ENCODE measurements at regions of chr11 and their contacts with region 1.

Region 1: GRCh38 chr11:120235024-120235861 is 4.7 kb upstream of the POU2F3 start:
- DNase-seq: no peak
- H3K4me3 ChIP-seq: no peak overlapping the region
- H3K27ac ChIP-seq: peak overlapping the region; percentile 7
- H3K4me1 ChIP-seq: peaks cover 24% of the 10 kb centered on the region
- H3K27me3 ChIP-seq: no peaks in the 10 kb centered on the region
- CTCF ChIP-seq: peak; percentile 20 to 50 (median 34)
- POLR2A ChIP-seq: no peak

Region 2: DNA sequence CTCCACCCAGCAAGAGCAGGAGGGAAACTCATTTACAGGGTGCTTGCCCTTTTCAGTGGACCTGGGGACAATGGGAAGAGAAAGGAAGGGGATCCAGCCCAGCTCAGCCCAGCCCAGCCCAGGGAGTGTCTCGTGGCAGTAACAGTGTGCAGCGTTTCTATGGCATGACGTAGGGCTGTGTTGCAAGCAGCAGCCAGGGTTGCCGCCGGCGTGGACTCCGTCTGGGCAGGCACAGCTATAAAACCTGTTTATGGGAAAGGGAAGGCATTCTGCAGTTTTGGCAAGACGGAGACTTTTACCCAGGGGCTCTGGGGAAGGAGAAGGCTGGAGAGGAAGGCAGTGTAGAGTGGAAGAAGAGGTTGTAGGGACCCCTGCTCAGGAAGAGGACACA is 106.5 kb before region 1 on chr11:
- intact Hi-C with region 1: no loop called
- DNase-seq: no peak
- H3K4me3 ChIP-seq: peak overlapping the region in 1 of 2 donors; percentile 20
- H3K27ac ChIP-seq: peak overlapping the region; percentile 89
- H3K4me1 ChIP-seq: peaks cover 54% of the 10 kb centered on the region
- H3K27me3 ChIP-seq: no peaks in the 10 kb centered on the region
- CTCF ChIP-seq: no peak
- POLR2A ChIP-seq: peak in 1 of 2 donors; percentile 51

Region 3: DNA sequence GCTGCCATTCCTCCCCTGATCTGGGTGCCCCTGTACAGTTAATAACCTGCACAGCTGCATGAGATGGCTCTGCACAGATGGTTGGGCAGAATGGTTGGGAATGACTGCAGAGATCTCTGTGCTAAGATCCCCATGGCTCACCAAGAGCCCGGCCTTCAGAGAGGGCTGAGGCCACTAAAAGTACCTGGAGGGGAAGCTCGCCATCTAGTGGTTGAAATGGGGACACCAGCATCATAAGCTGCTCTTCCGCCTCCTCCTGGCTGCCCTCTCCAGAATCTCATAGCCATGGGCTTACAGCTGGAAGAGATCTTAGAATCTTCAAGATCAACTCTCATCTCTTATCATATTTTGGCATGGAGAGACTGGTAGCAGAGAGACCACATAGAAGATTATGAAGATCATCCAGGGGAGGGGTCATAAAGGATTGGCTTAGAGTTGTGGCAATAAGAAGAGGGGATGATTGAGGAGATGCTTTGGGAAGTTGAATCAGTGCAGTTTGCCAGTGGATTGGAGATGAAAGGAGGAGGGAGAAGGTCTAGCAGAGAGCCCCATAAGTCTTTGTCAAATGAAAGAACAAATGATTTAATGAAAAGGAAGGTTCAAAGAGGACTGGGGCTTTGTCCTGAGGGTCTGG is 67.9 kb after region 1 on chr11:
- intact Hi-C with region 1: loop called (anchors 5 kb)
- DNase-seq: no peak
- H3K4me3 ChIP-seq: no peak overlapping the region
- H3K27ac ChIP-seq: peak overlapping the region; percentile 58
- H3K4me1 ChIP-seq: peaks cover 15% of the 10 kb centered on the region
- H3K27me3 ChIP-seq: no peaks in the 10 kb centered on the region
- CTCF ChIP-seq: peak; percentile 56 to 81 (median 70)
- POLR2A ChIP-seq: no peak

Region 4: GRCh38 chr11:120375076-120375475 is 139.8 kb after region 1 on chr11:
- intact Hi-C with region 1: no loop called
- DNase-seq: no peak
- H3K4me3 ChIP-seq: no peak overlapping the region
- H3K27ac ChIP-seq: no peak overlapping the region
- H3K4me1 ChIP-seq: peaks cover 62% of the 10 kb centered on the region
- H3K27me3 ChIP-seq: no peaks in the 10 kb centered on the region
- CTCF ChIP-seq: no peak
- POLR2A ChIP-seq: no peak

Region 5: GRCh38 chr11:120400564-120401364 is 165.5 kb after region 1 on chr11:
- intact Hi-C with region 1: no loop called
- DNase-seq: no peak
- H3K4me3 ChIP-seq: no peak overlapping the region
- H3K27ac ChIP-seq: peak overlapping the region; percentile 34
- H3K4me1 ChIP-seq: peaks cover 32% of the 10 kb centered on the region
- H3K27me3 ChIP-seq: no peaks in the 10 kb centered on the region
- CTCF ChIP-seq: no peak
- POLR2A ChIP-seq: no peak

Region 6: DNA sequence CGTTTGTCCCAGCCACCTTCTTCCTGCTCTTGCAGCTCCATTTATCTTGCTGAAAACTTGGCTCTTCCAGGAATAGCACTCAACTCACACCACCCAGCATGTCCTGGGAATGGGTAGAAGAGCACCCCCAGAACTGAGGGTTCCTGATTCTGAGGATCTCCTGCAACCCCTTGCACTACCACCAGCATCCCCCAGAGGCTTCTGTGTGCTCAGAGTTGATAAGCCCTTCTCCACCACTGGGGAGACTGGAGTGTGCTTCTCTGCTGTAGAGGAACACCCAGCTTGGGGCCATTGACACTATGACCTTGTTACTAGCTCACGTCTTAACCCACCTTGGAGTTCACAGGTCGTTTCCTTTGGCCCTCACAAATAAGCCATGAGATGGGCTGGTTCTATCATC is 397.3 kb after region 1 on chr11:
- intact Hi-C with region 1: no loop called
- DNase-seq: no peak
- H3K4me3 ChIP-seq: no peak overlapping the region
- H3K27ac ChIP-seq: no peak overlapping the region
- H3K4me1 ChIP-seq: no peaks in the 10 kb centered on the region
- H3K27me3 ChIP-seq: no peaks in the 10 kb centered on the region
- CTCF ChIP-seq: no peak
- POLR2A ChIP-seq: no peak